Activated T-helper 1 cell treated with anti-CD3 and anti-CD28 coated beads, Interleukin-12 subunit alpha, Interleukin-12 subunit beta, Interleukin-2, Interleukin-4 antibody, amounts not matched to agents 30 ng/mL and 10 ng/mL and 1 ng/mL, durations not matched to agents 14 hours and 24 hours and 36 hours (primary cell): ENCODE measurements at regions of chr1 and their contacts with region 1.

Region 1: GRCh38 chr1:159077120-159077961 is 775 bp upstream of the AIM2 start:
- DNase-seq: peak; percentile 96
- H3K4me3 Mint-ChIP-seq: peak overlapping the region; percentile 91
- H3K27ac Mint-ChIP-seq: peak overlapping the region; percentile 97
- H3K4me1 Mint-ChIP-seq: peaks cover 61% of the 10 kb centered on the region
- H3K27me3 Mint-ChIP-seq: no peaks in the 10 kb centered on the region

Region 2: DNA sequence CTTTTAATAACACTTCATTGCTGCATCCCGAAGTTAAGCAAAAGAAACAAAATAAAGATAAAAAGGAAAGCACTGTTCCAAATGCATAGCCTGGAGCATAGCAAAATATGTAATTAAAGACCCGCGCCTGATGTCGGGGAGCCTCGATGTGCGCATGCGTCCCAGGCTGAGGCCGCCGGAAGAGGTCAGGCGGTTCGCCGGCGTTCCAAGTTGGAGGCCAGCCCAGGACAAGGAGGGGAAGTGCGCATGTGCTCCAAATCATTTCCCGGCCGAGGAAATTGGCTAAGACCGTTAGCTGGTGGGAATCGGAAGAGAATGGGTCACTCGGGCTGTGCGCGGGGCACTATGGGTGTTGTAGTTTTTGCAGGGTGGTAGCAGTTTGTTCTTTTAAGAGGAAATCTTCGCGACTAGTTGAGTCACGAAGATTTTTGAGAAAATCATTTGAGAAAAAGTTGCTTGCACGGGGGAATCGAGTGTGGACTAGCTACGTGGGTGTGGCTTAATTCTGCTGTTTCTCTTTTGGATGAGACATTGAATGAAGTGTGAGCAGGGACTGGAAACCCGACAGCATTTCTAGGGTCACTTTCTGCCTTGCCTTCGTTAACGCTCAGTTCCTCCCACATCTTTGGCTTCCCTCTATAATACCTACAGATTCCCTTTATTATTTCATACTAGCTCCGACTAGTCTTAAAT is 927.6 kb before region 1 on chr1:
- intact Hi-C with region 1: loop called (anchors 5 kb)
- DNase-seq: peak; percentile 57
- H3K4me3 Mint-ChIP-seq: peak overlapping the region; percentile 89
- H3K27ac Mint-ChIP-seq: peak overlapping the region; percentile 83
- H3K4me1 Mint-ChIP-seq: peaks cover 20% of the 10 kb centered on the region
- H3K27me3 Mint-ChIP-seq: no peaks in the 10 kb centered on the region

Region 3: DNA sequence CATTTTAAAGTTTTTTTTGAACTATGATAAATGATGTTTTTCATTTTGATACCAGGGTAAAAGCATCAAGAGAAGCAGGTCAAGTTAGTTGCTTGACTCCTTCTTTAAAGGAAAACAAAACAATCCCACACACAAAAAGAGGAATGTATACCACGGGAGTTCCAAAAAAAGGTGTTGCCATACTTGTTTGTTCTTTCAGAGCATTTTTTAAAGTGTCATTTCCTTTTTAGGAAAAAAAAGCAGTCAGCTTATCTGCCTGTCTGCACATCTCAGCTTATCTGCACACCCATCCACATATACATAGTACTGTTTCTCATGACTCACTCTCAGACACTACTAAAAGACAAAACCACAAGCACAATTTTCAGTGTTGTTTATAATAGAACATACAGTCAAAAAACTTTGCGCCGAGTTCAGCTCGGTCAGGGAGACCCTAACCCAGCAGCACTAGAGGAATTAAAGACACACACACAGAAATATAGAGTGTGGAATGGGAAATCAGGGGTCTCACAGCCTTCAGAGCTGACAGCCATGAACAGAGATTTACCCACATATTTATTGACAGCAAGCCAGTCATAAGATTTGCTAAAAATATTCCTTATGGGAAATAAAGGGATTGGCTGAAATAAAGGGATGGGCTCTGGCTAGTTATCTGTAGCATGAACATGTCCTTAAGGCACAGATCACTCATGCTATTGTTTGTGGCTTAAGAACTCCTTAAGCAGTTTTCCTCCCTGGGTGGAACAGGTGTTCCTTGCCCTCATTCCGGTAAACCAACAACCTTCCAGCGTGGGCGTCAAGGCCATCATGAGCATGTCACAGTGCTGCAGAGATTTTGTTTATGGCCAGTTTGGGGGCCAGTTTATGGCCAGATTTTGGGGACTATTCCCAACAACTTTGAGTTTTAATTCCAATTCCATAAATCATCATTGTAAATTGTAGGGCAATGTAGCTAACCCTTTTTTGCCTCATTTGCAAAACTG is 257.6 kb before region 1 on chr1:
- intact Hi-C with region 1: loop called (anchors 1 kb)
- DNase-seq: no peak
- H3K4me3 Mint-ChIP-seq: peak overlapping the region; percentile 47
- H3K27ac Mint-ChIP-seq: peak overlapping the region; percentile 79
- H3K4me1 Mint-ChIP-seq: peaks cover 31% of the 10 kb centered on the region
- H3K27me3 Mint-ChIP-seq: peaks cover 6% of the 10 kb centered on the region

Region 4: DNA sequence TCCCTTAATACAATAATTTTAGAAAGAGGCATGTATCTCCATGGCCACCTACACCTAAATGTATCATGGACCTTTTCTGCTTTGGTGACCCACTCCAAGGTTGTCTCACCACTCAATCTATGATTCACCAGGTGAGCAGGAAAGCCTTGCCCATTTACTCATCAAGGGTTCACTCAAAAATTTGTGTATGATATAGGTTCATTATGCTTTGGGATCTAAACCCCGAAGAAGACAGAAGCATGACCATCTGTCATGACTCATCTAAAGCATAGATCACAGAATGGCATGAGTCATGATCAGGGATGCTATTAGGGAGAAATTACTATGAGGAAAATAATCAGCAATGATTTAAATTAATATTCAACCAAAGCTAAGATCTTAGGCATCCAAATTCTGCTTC is 107.5 kb before region 1 on chr1:
- intact Hi-C with region 1: loop called (anchors 1 kb)
- DNase-seq: no peak
- H3K4me3 Mint-ChIP-seq: no peak overlapping the region
- H3K27ac Mint-ChIP-seq: peak overlapping the region; percentile 56
- H3K4me1 Mint-ChIP-seq: peaks cover 13% of the 10 kb centered on the region
- H3K27me3 Mint-ChIP-seq: peaks cover 3% of the 10 kb centered on the region

Region 5: GRCh38 chr1:159089184-159089791 is 11.9 kb after region 1 on chr1:
- intact Hi-C with region 1: loop called (anchors 1 kb)
- DNase-seq: no peak
- H3K4me3 Mint-ChIP-seq: no peak overlapping the region
- H3K27ac Mint-ChIP-seq: peak overlapping the region; percentile 54
- H3K4me1 Mint-ChIP-seq: peaks cover 54% of the 10 kb centered on the region
- H3K27me3 Mint-ChIP-seq: no peaks in the 10 kb centered on the region

Region 6: DNA sequence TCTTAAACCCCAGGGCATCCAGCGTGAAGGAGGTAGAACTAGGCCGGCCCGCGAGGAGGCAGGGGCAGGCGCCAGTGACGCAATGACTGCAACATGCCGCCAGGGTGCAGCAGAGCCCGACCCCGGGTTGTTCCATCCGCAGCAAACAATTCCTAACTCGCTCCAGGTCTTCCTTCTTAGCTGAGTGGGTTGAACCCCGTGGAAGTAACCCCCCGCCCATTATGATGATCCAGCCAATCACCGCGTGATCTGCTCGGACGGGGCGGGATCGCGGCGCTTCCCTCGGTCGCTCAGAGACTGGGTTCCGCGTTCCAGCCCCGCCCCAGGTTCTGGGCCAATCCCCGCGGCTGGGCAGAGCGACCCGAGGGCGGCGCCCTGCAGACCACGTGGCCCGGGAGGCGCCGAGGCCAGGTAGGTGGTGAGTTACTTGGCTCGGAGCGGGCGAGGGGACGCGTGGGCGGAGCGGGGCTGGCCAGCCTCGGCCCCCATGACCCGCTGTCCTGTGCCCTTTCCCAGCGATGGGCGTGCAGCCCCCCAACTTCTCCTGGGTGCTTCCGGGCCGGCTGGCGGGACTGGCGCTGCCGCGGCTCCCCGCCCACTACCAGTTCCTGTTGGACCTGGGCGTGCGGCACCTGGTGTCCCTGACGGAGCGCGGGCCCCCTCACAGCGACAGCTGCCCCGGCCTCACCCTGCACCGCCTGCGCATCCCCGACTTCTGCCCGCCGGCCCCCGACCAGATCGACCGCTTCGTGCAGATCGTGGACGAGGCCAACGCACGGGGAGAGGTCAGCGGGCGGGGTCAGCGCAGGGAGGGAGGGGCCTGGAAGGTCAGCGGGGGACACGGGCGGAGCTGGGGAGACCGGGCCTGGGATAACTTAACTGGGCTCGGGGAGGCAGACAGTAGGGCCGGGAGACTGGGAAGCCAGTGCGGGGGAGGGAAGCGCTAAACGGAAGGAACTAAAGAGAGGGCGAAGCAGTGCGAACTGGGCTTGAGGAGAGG is 703.5 kb after region 1 on chr1 and contains the start of gene DUSP23:
- intact Hi-C with region 1: loop called (anchors 5 kb)
- DNase-seq: peak; percentile 94
- H3K4me3 Mint-ChIP-seq: peak within 1 kb of the TSS; percentile 82
- H3K27ac Mint-ChIP-seq: peak within 1 kb of the TSS; percentile 63
- H3K4me1 Mint-ChIP-seq: peaks cover 7% of the 10 kb centered on the region
- H3K27me3 Mint-ChIP-seq: peaks cover 9% of the 10 kb centered on the region
- total RNA-seq, gene DUSP23: 22.4 and 23.4 TPM in 2 replicates